BJ (cell line): ENCODE measurements at regions of chr14 and their contacts with region 1.

Region 1: GRCh38 chr14:35404449-35405303 is at the start of gene NFKBIA:
- DNase-seq: no peak
- H3K4me3 ChIP-seq: peak within 1 kb of the TSS; percentile 88
- H3K27me3 ChIP-seq: no peaks in the 10 kb centered on the region
- CTCF ChIP-seq: peak; percentile 47
- polyA plus RNA-seq, gene NFKBIA: 35.3 and 73.2 TPM in 2 replicates

Region 2: GRCh38 chr14:35215110-35215876 is 189.4 kb before region 1 on chr14:
- CTCF ChIA-PET with region 1: interaction called, 45 read pairs
- POLR2A ChIA-PET with region 1: no interaction called
- DNase-seq: peak; percentile 29
- H3K4me3 ChIP-seq: no peak overlapping the region
- H3K27me3 ChIP-seq: no peaks in the 10 kb centered on the region
- CTCF ChIP-seq: peak; percentile 65

Region 3: DNA sequence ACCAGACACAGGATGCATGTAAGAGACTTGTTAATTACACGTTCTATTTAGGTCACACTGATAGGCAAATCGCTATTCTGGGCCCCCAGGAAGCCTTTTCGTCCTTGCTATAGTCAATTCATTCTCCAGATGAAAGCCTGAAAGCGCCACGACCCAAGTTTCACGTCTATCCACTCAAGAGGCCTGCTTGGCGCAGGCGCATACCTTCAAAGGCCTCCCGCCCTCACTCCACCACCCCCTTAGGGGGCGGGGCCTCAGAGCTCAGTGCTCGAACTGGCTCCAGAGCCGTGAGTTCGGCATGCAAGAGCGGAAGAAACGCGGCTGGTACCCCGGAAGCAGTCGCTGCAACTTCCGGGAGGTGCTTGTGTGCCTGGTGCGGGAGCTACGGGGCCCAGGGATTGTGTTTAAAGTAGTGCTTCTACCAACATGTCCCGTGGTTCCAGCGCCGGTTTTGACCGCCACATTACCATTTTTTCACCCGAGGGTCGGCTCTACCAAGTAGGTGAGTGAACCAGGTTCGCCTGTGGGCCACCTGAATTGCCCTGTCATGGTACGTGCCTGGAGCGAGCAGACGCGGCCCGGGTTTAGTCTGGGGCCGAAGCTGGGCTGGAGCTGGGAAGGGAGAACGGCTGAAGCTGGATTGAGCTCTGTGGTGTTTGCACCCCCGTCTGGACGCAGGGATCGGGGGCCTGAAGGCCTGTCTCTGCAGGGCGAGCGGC is 112.5 kb before region 1 on chr14 and contains the start of gene PSMA6:
- CTCF ChIA-PET with region 1: no interaction called
- POLR2A ChIA-PET with region 1: interaction called, 16 read pairs
- DNase-seq: peak; percentile 95
- H3K4me3 ChIP-seq: peak within 1 kb of the TSS; percentile 80
- H3K27me3 ChIP-seq: no peaks in the 10 kb centered on the region
- CTCF ChIP-seq: no peak
- polyA plus RNA-seq, gene PSMA6: 155 and 216 TPM in 2 replicates

Region 4: GRCh38 chr14:35385042-35385839 is 19.4 kb before region 1 on chr14:
- CTCF ChIA-PET with region 1: interaction called, 15 read pairs
- POLR2A ChIA-PET with region 1: interaction called, 6 read pairs
- DNase-seq: peak; percentile 86
- H3K4me3 ChIP-seq: no peak overlapping the region
- H3K27me3 ChIP-seq: no peaks in the 10 kb centered on the region
- CTCF ChIP-seq: no peak

Region 5: GRCh38 chr14:35600253-35600652 is 195.6 kb after region 1 on chr14:
- CTCF ChIA-PET with region 1: no interaction called
- POLR2A ChIA-PET with region 1: no interaction called
- DNase-seq: no peak
- H3K4me3 ChIP-seq: no peak overlapping the region
- H3K27me3 ChIP-seq: no peaks in the 10 kb centered on the region
- CTCF ChIP-seq: no peak